PC-9 (cell line): ENCODE measurements at regions of chr22 and their contacts with region 1.

Region 1: GRCh38 chr22:22023581-22024137 is 41.1 kb upstream of the TOP3B start:
- DNase-seq: no peak
- H3K4me3 ChIP-seq: no peak overlapping the region
- H3K27ac ChIP-seq: no peak overlapping the region
- H3K4me1 ChIP-seq: no peaks in the 10 kb centered on the region
- H3K27me3 ChIP-seq: no peaks in the 10 kb centered on the region; the same call in 1 of the 2 replicates
- CTCF ChIP-seq: no peak

Region 2: DNA sequence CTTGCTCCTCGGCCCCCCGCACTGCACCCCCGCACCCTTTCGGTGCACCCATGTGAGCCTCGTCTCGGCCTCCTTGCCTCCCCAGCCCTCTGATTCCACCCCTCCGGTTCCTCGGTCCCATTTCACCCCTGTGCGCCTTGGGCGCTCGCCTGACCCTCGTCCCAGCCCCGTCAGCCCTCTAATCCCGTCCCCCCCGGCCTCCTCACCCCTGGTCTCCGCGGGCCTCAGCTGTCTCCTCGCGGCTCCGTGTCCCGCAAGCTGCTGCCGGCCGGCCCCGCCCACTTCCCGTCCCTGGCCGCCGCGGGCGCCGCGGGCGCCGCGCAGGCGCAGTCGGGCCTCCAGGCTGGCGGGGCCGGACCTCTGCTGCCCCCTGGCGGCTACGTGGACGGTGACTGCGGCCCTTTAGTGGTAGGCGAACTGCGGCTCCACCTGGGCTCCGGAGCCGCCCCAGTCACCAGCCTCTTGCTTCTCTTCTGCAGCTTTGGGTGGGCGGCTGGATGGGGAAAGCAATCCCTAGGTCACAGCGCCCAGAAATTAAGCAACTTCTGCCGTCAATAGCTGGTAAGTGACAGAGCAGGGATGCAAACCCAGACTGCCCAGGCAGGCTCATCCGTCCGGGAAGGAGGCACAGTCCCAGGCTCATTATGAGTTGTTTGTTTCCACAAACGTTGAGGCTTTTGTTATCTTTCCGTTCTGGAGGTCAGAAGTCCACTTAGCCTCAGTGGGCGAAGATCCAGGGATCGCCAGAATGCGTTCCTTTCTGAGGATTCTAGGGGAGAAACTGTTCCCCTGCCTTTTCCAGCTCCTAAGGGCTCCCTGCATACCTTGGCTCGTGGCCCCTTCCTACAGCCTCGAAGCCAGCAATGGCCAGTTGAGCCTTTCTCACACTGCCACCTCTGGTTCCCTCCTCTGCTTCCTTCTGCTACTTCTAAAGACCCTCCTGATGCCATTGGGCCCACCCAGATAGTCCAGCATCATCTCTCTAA is 70.8 kb before region 1 on chr22 and contains the start of gene PPM1F:
- CTCF ChIA-PET with region 1: no interaction called
- POLR2A ChIA-PET with region 1: no interaction called
- intact Hi-C with region 1: no loop called
- DNase-seq: peak in 1 of 2 experiments; percentile 83
- H3K4me3 ChIP-seq: peak within 1 kb of the TSS; percentile 60
- H3K27ac ChIP-seq: no peak within 1 kb of the TSS
- H3K4me1 ChIP-seq: peaks cover 5% of the 10 kb centered on the region
- H3K27me3 ChIP-seq: no peaks in the 10 kb centered on the region
- CTCF ChIP-seq: peak; percentile 64
- total RNA-seq, gene PPM1F: 20.6 and 22.1 TPM in 2 replicates

Region 3: GRCh38 chr22:22118987-22119386 is 95.3 kb after region 1 on chr22:
- CTCF ChIA-PET with region 1: no interaction called
- POLR2A ChIA-PET with region 1: interaction called, 10 read pairs
- intact Hi-C with region 1: no loop called
- DNase-seq: no peak
- H3K4me3 ChIP-seq: no peak overlapping the region
- H3K27ac ChIP-seq: no peak overlapping the region
- H3K4me1 ChIP-seq: no peaks in the 10 kb centered on the region
- H3K27me3 ChIP-seq: peaks cover 12% of the 10 kb centered on the region; the same call in 1 of the 2 replicates
- CTCF ChIP-seq: no peak